Caco-2 (cell line): ENCODE measurements at regions of chr2 and their contacts with region 1.

Region 1: GRCh38 chr2:8872821-8873432 is 35.5 kb upstream of the KIDINS220 start:
- DNase-seq: peak in 1 of 2 experiments; percentile 43
- H3K4me3 ChIP-seq: no peak overlapping the region
- H3K4me3 Mint-ChIP-seq: no peak overlapping the region
- H3K27ac Mint-ChIP-seq: no peak overlapping the region
- H3K4me1 ChIP-seq: no peaks in the 10 kb centered on the region
- H3K4me1 Mint-ChIP-seq: no peaks in the 10 kb centered on the region
- H3K27me3 ChIP-seq: no peaks in the 10 kb centered on the region
- H3K27me3 Mint-ChIP-seq: no peaks in the 10 kb centered on the region
- CTCF ChIP-seq: peak; percentile 42 to 71

Region 2: GRCh38 chr2:8986327-8986976 is 113.5 kb after region 1 on chr2:
- CTCF ChIA-PET with region 1: interaction called, 3 read pairs
- POLR2A ChIA-PET with region 1: no interaction called
- intact Hi-C with region 1: loop called (anchors 1 kb)
- DNase-seq: peak in 1 of 2 experiments; percentile 47
- H3K4me3 ChIP-seq: no peak overlapping the region
- H3K4me3 Mint-ChIP-seq: no peak overlapping the region
- H3K27ac Mint-ChIP-seq: no peak overlapping the region
- H3K4me1 ChIP-seq: no peaks in the 10 kb centered on the region
- H3K4me1 Mint-ChIP-seq: no peaks in the 10 kb centered on the region
- H3K27me3 ChIP-seq: no peaks in the 10 kb centered on the region
- H3K27me3 Mint-ChIP-seq: no peaks in the 10 kb centered on the region
- CTCF ChIP-seq: peak; percentile 51 to 52

Region 3: DNA sequence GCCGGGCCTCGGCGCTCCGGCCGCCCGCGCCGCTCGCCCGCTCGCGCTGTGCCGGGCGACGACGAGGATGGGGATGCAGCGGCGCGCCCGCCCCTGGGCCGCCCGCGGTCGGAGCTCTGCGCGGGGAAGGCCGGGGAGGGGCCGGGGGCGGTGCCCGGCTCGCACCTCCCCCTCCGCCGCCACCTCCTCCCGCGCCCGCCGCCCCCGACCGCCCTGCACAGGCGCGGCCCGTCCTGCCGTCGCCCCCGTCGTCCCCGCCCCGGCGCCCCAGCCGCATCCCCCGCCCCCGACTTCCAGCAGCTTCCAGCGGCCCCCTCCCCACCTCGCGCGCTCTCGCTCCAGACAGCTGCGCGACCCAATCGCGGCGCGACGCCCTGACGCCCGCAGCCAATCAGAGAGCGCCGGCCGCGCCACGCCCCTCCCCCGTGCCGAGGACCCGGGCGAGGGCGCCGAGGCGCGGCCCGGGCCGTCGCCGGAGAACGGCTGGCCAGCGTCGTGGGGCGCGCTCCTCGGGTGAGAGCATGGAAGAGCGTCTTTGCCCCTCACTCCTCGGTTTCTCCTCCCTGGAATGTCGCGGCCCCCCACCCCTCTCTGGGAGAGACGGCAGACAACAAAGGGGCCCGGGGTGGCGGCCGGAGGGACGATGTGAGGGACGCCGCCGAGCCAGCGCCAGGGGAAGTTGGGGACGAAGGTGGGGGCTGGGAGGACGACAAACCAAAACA is 130.8 kb after region 1 on chr2 and contains the start of gene MBOAT2:
- CTCF ChIA-PET with region 1: no interaction called
- POLR2A ChIA-PET with region 1: no interaction called
- intact Hi-C with region 1: loop called (anchors 5 kb)
- DNase-seq: peak; percentile 93 to 95
- H3K4me3 ChIP-seq: peak within 1 kb of the TSS; percentile 83
- H3K4me3 Mint-ChIP-seq: peak within 1 kb of the TSS; percentile 84
- H3K27ac Mint-ChIP-seq: peak within 1 kb of the TSS; percentile 90
- H3K4me1 ChIP-seq: peaks cover 8% of the 10 kb centered on the region
- H3K4me1 Mint-ChIP-seq: peaks cover 13% of the 10 kb centered on the region
- H3K27me3 ChIP-seq: no peaks in the 10 kb centered on the region
- H3K27me3 Mint-ChIP-seq: peaks cover 3% of the 10 kb centered on the region
- CTCF ChIP-seq: no peak
- total RNA-seq, gene MBOAT2: 12.6 TPM in 2 replicates

Region 4: GRCh38 chr2:9114516-9114915 is 241.6 kb after region 1 on chr2:
- CTCF ChIA-PET with region 1: no interaction called
- POLR2A ChIA-PET with region 1: no interaction called
- intact Hi-C with region 1: loop called (anchors 1 kb)
- DNase-seq: no peak
- H3K4me3 ChIP-seq: no peak overlapping the region
- H3K4me3 Mint-ChIP-seq: no peak overlapping the region
- H3K27ac Mint-ChIP-seq: no peak overlapping the region
- H3K4me1 ChIP-seq: no peaks in the 10 kb centered on the region
- H3K4me1 Mint-ChIP-seq: no peaks in the 10 kb centered on the region
- H3K27me3 ChIP-seq: no peaks in the 10 kb centered on the region
- H3K27me3 Mint-ChIP-seq: no peaks in the 10 kb centered on the region
- CTCF ChIP-seq: no peak